Endothelial cell of umbilical vein (primary cell): ENCODE measurements at regions of chr12 and their contacts with region 1.

Region 1: GRCh38 chr12:48814262-48815125 is 3.8 kb upstream of the CACNB3 start:
- DNase-seq: peak; percentile 73
- H3K4me3 ChIP-seq: peak overlapping the region; percentile 45 to 63 (median 54)
- H3K27ac ChIP-seq: peak overlapping the region; percentile 10
- H3K4me1 ChIP-seq: peaks cover 20% of the 10 kb centered on the region
- H3K27me3 ChIP-seq: no peaks in the 10 kb centered on the region
- CTCF ChIP-seq: peak; percentile 98 to 100
- POLR2A ChIP-seq: no peak

Region 2: DNA sequence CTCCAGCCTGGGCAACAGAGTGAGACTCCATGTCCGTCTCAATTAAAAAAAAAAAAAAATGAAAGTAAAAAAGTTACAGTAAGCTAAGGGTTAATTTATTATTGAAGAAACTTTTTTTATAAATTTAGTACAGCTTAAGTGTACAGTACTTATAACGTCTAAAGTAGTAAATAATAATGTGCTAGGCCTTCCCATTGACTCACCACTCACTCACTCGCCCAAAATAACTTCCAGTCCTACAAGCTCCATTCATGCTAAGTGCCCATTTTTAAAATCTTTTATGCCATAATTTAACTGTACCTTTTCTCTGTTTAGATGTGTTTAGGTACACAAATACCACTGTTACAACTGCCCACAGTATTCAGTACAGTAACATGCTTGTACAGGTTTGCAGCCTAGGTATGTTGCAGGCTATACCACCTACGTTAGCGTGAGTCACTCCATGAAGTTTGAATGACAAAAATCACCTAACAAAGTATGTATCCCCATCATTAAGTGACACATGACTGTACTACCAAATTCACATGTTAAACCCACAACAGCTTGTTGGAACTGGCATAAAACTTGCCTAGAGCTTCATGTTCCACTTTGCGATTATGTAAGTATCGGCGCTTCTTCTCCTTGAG is 143.2 kb before region 1 on chr12:
- CTCF ChIA-PET with region 1: no interaction called
- POLR2A ChIA-PET with region 1: no interaction called
- dilution Hi-C with region 1: no loop called
- intact Hi-C with region 1: no loop called
- DNase-seq: no peak
- H3K4me3 ChIP-seq: no peak overlapping the region
- H3K27ac ChIP-seq: no peak overlapping the region
- H3K4me1 ChIP-seq: no peaks in the 10 kb centered on the region
- H3K27me3 ChIP-seq: no peaks in the 10 kb centered on the region
- CTCF ChIP-seq: no peak
- POLR2A ChIP-seq: no peak

Region 3: DNA sequence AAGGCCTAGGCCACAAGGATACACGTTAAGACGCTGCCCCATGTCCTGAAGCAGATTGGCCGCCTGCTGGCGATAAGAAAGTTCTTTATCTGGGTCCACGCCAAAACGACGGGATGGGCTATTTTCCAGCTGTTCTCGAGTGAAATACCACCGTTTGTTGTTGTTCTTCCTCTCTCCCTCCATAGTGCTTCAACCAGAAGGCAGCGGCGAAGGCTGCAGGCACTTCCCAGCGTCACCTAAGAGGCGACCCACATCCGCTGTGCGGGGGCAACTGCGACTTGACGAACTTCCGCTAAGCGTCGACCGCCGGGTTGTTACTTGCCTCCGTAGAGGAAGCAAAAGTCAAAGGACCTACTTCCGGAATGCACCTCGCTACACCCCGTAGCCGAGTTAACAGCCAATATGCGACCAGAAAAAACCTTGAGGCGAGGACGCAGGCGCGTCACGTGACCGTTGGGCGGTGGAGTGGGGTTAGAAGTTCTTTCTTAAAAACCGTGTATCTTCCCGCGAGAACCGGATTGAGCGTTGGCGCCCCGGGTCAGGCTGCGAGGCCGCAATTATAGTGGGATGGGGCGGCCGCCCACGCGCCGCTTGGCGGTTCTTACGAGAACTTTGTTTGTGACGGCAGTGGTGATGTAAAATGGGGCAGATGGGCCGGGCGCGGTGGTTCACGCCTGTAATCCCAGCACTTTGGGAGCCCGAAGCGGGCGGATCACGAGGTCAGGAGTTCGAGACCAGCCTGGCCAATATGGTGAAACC is 97.8 kb before region 1 on chr12 and contains the start of gene CCNT1:
- CTCF ChIA-PET with region 1: no interaction called
- POLR2A ChIA-PET with region 1: no interaction called
- dilution Hi-C with region 1: no loop called
- intact Hi-C with region 1: no loop called
- DNase-seq: peak; percentile 100
- H3K4me3 ChIP-seq: peak within 1 kb of the TSS; percentile 65 to 92 (median 71)
- H3K27ac ChIP-seq: peak within 1 kb of the TSS; percentile 90
- H3K4me1 ChIP-seq: peaks cover 16% of the 10 kb centered on the region
- H3K27me3 ChIP-seq: no peaks in the 10 kb centered on the region
- CTCF ChIP-seq: peak; percentile 10 to 31
- POLR2A ChIP-seq: peak; percentile 61
- total RNA-seq, gene CCNT1: 33.0 and 35.1 TPM in 2 replicates

Region 4: GRCh38 chr12:48750769-48751735 is 63.4 kb before region 1 on chr12:
- CTCF ChIA-PET with region 1: interaction called, 30 read pairs
- POLR2A ChIA-PET with region 1: no interaction called
- dilution Hi-C with region 1: no loop called
- intact Hi-C with region 1: no loop called
- DNase-seq: no peak
- H3K4me3 ChIP-seq: no peak overlapping the region
- H3K27ac ChIP-seq: no peak overlapping the region
- H3K4me1 ChIP-seq: no peaks in the 10 kb centered on the region
- H3K27me3 ChIP-seq: peaks cover 7 to 8% of the 10 kb centered on the region in 2 experiments
- CTCF ChIP-seq: no peak
- POLR2A ChIP-seq: no peak

Region 5: GRCh38 chr12:48758221-48758620 is 56.3 kb before region 1 on chr12:
- CTCF ChIA-PET with region 1: interaction called, 30 read pairs
- POLR2A ChIA-PET with region 1: no interaction called
- dilution Hi-C with region 1: no loop called
- intact Hi-C with region 1: no loop called
- DNase-seq: no peak
- H3K4me3 ChIP-seq: no peak overlapping the region
- H3K27ac ChIP-seq: no peak overlapping the region
- H3K4me1 ChIP-seq: no peaks in the 10 kb centered on the region
- H3K27me3 ChIP-seq: peaks cover 0 to 3% of the 10 kb centered on the region in 2 experiments
- CTCF ChIP-seq: no peak
- POLR2A ChIP-seq: no peak

Region 6: GRCh38 chr12:48788854-48789796 is 25.4 kb before region 1 on chr12 and contains the start of gene ADCY6:
- CTCF ChIA-PET with region 1: interaction called, 12 read pairs
- POLR2A ChIA-PET with region 1: no interaction called
- dilution Hi-C with region 1: no loop called
- intact Hi-C with region 1: no loop called
- DNase-seq: peak; percentile 79
- H3K4me3 ChIP-seq: peak within 1 kb of the TSS; percentile 58 to 90 (median 84)
- H3K27ac ChIP-seq: peak within 1 kb of the TSS; percentile 50
- H3K4me1 ChIP-seq: peaks cover 10% of the 10 kb centered on the region
- H3K27me3 ChIP-seq: no peaks in the 10 kb centered on the region
- CTCF ChIP-seq: no peak
- POLR2A ChIP-seq: no peak
- total RNA-seq, gene ADCY6: 43.3 and 46.2 TPM in 2 replicates